Motor neuron (in vitro differentiated cells): ENCODE measurements at regions of chr2 and their contacts with region 1.

Region 1: GRCh38 chr2:160970052-160970965 is 189.9 kb upstream of the TANK start:
- ATAC-seq: peak in 3 of 8 experiments; percentile 75 to 79 (median 76)
- H3K4me3 ChIP-seq: no peak overlapping the region
- H3K27ac ChIP-seq: no peak overlapping the region
- H3K4me1 ChIP-seq: peaks cover 0 to under 1% of the 10 kb centered on the region in 2 donors

Region 2: GRCh38 chr2:160493227-160494028 is 476.9 kb before region 1 on chr2 and contains the start of gene RBMS1:
- in situ Hi-C with region 1: loop called in 1 of 9 experiments (anchors 25 kb)
- ATAC-seq: peak; percentile 30 to 68 (median 66)
- H3K4me3 ChIP-seq: peak within 1 kb of the TSS; percentile 58 to 98 (median 89)
- H3K27ac ChIP-seq: peak within 1 kb of the TSS; percentile 47 to 58
- H3K4me1 ChIP-seq: peaks cover 0 to 19% of the 10 kb centered on the region in 2 donors
- total RNA-seq, gene RBMS1: 17.9 to 172 (median 53.5) TPM

Region 3: DNA sequence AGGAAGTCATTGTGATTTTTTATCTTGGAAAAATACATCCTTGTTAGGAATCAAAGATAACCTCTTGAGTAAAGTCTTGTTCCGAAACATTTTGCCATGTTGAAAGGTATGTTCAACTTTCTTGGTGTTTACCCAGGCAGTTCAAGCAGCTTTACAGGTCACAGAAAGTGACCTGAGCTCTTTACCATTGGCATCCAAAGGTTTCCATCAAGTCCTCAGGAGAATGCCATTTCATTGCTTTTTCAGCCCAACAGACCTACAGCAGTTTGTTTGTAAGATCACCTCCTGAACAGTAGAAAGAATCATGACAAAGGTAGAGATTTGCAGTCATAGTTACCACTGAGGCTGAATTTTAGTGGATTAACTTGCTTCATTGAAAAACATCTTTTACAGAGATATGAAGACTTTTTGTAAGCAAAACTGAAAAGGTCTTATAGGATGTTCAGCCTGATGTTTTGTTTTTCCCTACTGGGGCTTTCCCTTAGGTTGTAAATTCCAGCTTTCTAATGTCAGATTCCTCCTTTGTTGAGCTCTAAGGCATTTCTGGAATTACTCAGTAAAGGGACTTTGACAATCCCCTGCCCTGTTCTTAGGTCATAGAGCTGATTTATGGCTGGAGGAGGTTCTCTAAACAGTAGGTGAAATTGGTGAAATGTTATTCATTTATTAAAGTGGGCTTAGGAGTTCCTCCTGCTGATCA is 239.9 kb before region 1 on chr2:
- in situ Hi-C with region 1: no loop called
- ATAC-seq: peak in 2 of 8 experiments; percentile 30 to 34
- H3K4me3 ChIP-seq: no peak overlapping the region
- H3K27ac ChIP-seq: no peak overlapping the region
- H3K4me1 ChIP-seq: no peaks in the 10 kb centered on the region